CD14-positive monocyte (primary cell): ENCODE measurements at regions of chr11 and their contacts with region 1.

Region 1: GRCh38 chr11:798093-798713 is at the start of gene SLC25A22:
- DNase-seq: peak; percentile 70 to 78 (median 72)
- H3K4me3 ChIP-seq: peak within 1 kb of the TSS; percentile 54 to 85 (median 84)
- H3K4me3 Mint-ChIP-seq: peak within 1 kb of the TSS; percentile 80 to 94
- H3K27ac ChIP-seq: peak within 1 kb of the TSS; percentile 64 to 77
- H3K27ac Mint-ChIP-seq: peak within 1 kb of the TSS; percentile 42 to 91 (median 87)
- H3K4me1 ChIP-seq: peaks cover 29 to 33% of the 10 kb centered on the region in 2 donors
- H3K4me1 Mint-ChIP-seq: peaks cover 18% of the 10 kb centered on the region
- H3K27me3 ChIP-seq: no peaks in the 10 kb centered on the region
- H3K27me3 Mint-ChIP-seq: no peaks in the 10 kb centered on the region
- CTCF ChIP-seq: peak; percentile 96
- polyA plus RNA-seq, gene SLC25A22: 4.4 to 20.9 (median 5.6) TPM

Region 2: GRCh38 chr11:747158-748006 is 50.8 kb before region 1 on chr11 and contains the start of gene TALDO1:
- intact Hi-C with region 1: loop called (anchors 1 to 5 kb)
- DNase-seq: peak; percentile 79 to 84 (median 83)
- H3K4me3 ChIP-seq: peak within 1 kb of the TSS; percentile 87 to 98 (median 90)
- H3K4me3 Mint-ChIP-seq: peak within 1 kb of the TSS; percentile 81 to 91
- H3K27ac ChIP-seq: peak within 1 kb of the TSS; percentile 92 to 98
- H3K27ac Mint-ChIP-seq: peak within 1 kb of the TSS; percentile 91 to 97 (median 96)
- H3K4me1 ChIP-seq: peaks cover 33 to 61% of the 10 kb centered on the region in 2 donors
- H3K4me1 Mint-ChIP-seq: peaks cover 35% of the 10 kb centered on the region
- H3K27me3 ChIP-seq: no peaks in the 10 kb centered on the region
- H3K27me3 Mint-ChIP-seq: no peaks in the 10 kb centered on the region
- CTCF ChIP-seq: no peak
- polyA plus RNA-seq, gene TALDO1: 502 to 1,249 (median 1,224) TPM

Region 3: GRCh38 chr11:777288-778255 is 20.6 kb before region 1 on chr11 and contains the start of gene GATD1:
- intact Hi-C with region 1: loop called (anchors 2 kb)
- DNase-seq: peak; percentile 80 to 86 (median 82)
- H3K4me3 ChIP-seq: peak within 1 kb of the TSS; percentile 60 to 84 (median 79)
- H3K4me3 Mint-ChIP-seq: peak within 1 kb of the TSS; percentile 81 to 87
- H3K27ac ChIP-seq: peak within 1 kb of the TSS in 1 of 2 donors; percentile 72
- H3K27ac Mint-ChIP-seq: peak within 1 kb of the TSS; percentile 33 to 84 (median 69)
- H3K4me1 ChIP-seq: peaks cover 29 to 36% of the 10 kb centered on the region in 2 donors
- H3K4me1 Mint-ChIP-seq: peaks cover 39% of the 10 kb centered on the region
- H3K27me3 ChIP-seq: no peaks in the 10 kb centered on the region
- H3K27me3 Mint-ChIP-seq: peaks cover 1 to 4% (median 3%) of the 10 kb centered on the region in 3 donors
- CTCF ChIP-seq: no peak
- polyA plus RNA-seq, gene GATD1: 4.5 to 45.6 (median 4.6) TPM

Region 4: GRCh38 chr11:809287-810039 is 11.3 kb after region 1 on chr11 and contains the start of gene RPLP2:
- intact Hi-C with region 1: loop called in 1 of 2 experiments (anchors 1 kb)
- DNase-seq: peak; percentile 97 to 98 (median 98)
- H3K4me3 ChIP-seq: peak within 1 kb of the TSS; percentile 79 to 96 (median 91)
- H3K4me3 Mint-ChIP-seq: peak within 1 kb of the TSS; percentile 93 to 95
- H3K27ac ChIP-seq: peak within 1 kb of the TSS; percentile 89 to 97
- H3K27ac Mint-ChIP-seq: peak within 1 kb of the TSS; percentile 96 to 100 (median 98)
- H3K4me1 ChIP-seq: peaks cover 33 to 40% of the 10 kb centered on the region in 2 donors
- H3K4me1 Mint-ChIP-seq: peaks cover 40% of the 10 kb centered on the region
- H3K27me3 ChIP-seq: no peaks in the 10 kb centered on the region
- H3K27me3 Mint-ChIP-seq: peaks cover 0 to under 1% (median 0%) of the 10 kb centered on the region in 3 donors
- CTCF ChIP-seq: no peak
- polyA plus RNA-seq, gene RPLP2: 879 to 1,191 (median 990) TPM

Region 5: DNA sequence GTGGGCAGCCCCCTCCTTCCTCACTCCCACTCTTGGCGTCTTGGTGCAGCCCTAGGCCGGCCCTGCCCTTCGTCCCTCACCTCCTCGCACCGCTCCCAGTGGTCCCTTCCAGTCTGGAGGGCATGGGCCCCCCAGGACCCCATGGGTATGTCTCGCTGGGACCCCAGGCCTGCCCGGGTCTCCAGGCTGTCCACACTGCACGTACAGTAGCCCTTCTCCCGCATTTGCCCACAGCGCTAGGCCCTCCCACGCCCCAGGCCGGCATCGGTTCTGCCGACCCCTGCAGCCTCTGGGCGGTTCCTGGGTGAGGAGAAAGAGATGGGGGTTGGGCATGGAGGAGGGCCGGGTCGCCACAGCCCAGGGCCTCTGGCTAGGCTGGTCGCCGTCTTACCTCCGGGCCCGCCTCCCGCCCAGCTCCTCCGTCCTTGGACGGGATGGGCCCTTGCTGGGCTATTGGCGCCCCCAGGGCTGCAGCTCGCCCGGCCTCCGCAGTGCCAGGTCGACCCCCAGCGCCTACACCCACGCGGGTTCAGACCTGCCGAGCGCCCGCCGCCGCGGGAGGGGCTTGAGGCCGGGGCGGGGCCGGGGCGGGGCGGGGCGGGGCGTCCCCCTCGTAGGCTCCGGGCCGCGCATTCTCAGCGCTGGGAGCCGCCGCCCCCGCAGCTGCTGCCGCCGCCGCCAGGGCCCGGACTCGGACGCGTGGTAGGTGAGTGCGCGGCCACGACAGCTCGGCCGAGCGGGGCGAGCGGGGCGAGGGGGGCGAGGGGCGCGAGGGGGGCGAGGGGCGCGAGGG is 34.3 kb after region 1 on chr11 and contains the start of gene CD151:
- intact Hi-C with region 1: no loop called
- DNase-seq: peak in 2 of 3 donors; percentile 41 to 47
- H3K4me3 ChIP-seq: peak within 1 kb of the TSS; percentile 47 to 85 (median 56)
- H3K4me3 Mint-ChIP-seq: peak within 1 kb of the TSS; percentile 84 to 87
- H3K27ac ChIP-seq: peak within 1 kb of the TSS in 1 of 2 donors; percentile 71
- H3K27ac Mint-ChIP-seq: peak within 1 kb of the TSS; percentile 63 to 95 (median 86)
- H3K4me1 ChIP-seq: peaks cover 71 to 74% of the 10 kb centered on the region in 2 donors
- H3K4me1 Mint-ChIP-seq: peaks cover 65% of the 10 kb centered on the region
- H3K27me3 ChIP-seq: peaks cover 10 to 59% of the 10 kb centered on the region in 2 donors
- H3K27me3 Mint-ChIP-seq: peaks cover 39 to 75% (median 46%) of the 10 kb centered on the region in 3 donors
- CTCF ChIP-seq: no peak
- polyA plus RNA-seq, gene CD151: 18.1 to 200 (median 57.4) TPM